ENCODE measurements at regions of chr19 and their contacts with region 1.

Region 1: DNA sequence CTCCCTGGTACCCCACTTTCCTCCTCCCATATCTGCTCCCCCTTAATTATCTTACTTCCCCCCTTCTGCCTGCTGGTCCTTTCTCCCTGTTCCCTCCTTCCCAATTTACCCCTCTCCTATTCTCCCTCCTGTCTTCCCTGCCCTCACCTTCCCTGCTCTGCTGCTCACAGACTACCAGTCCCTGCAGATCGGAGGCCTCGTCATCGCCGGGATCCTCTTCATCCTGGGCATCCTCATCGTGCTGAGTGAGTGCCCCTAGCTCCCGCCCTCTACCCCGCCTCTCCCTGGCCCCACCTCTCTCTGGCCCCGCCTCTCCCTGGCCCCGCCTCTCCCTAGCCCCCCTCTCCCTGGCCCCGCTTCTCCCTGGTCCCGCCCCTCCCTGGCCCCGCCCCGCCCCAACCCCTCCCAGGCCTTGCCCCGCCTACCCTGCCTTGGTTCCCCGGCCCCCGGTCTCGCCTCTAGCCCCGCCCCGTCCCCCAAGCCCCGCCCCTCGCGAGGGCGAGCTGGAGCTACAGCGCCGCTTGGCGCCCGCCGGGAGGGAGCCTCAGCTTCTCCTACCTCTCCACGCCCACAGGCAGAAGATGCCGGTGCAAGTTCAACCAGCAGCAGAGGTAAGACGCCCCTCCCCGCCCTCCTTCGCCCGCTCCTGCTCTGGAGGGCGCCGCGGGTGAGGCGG is 2.0 kb upstream of the FXYD7 start:
- DNase-seq: peak; percentile 95 to 100
- ATAC-seq: peak; percentile 59 to 86
- H3K4me3 ChIP-seq: peak overlapping the region; percentile 34
- H3K27ac ChIP-seq: peak overlapping the region in 1 of 2 experiments; percentile 52; a peak in 2 of 6 replicates
- H3K4me1 ChIP-seq: peaks cover 52% of the 10 kb centered on the region
- CTCF ChIP-seq: peak; percentile 66
- EP300 ChIP-seq: no peak
- POLR2A ChIP-seq: no peak
- RAD21 ChIP-seq: peak; percentile 65 to 82

Region 2: GRCh38 chr19:35090506-35091237 is 50.4 kb before region 1 on chr19:
- CTCF ChIA-PET with region 1: interaction called, 24 read pairs
- POLR2A ChIA-PET with region 1: no interaction called
- DNase-seq: peak; percentile 82 to 99
- ATAC-seq: peak; percentile 82 to 92
- H3K4me3 ChIP-seq: peak overlapping the region; percentile 29; the same call in 2 of the 3 replicates
- H3K27ac ChIP-seq: peak overlapping the region; percentile 10 to 60; a peak in 4 of 6 replicates
- H3K4me1 ChIP-seq: peaks cover 11% of the 10 kb centered on the region; the same call in 2 of the 3 replicates
- CTCF ChIP-seq: peak; percentile 95
- EP300 ChIP-seq: no peak
- POLR2A ChIP-seq: no peak
- RAD21 ChIP-seq: peak; percentile 88 to 97

Region 3: GRCh38 chr19:35114353-35115176 is 26.5 kb before region 1 on chr19:
- CTCF ChIA-PET with region 1: interaction called, 148 read pairs
- POLR2A ChIA-PET with region 1: no interaction called
- DNase-seq: peak; percentile 74 to 95
- ATAC-seq: peak; percentile 45 to 86
- H3K4me3 ChIP-seq: peak overlapping the region; percentile 6; the same call in 2 of the 3 replicates
- H3K27ac ChIP-seq: peak overlapping the region; percentile 19 to 36; a peak in 3 of 6 replicates
- H3K4me1 ChIP-seq: peaks cover 13% of the 10 kb centered on the region; the same call in 1 of the 3 replicates
- CTCF ChIP-seq: peak; percentile 98
- EP300 ChIP-seq: no peak
- POLR2A ChIP-seq: no peak
- RAD21 ChIP-seq: peak; percentile 80

Region 4: GRCh38 chr19:35124098-35125060 is 16.7 kb before region 1 on chr19:
- CTCF ChIA-PET with region 1: interaction called, 148 read pairs
- POLR2A ChIA-PET with region 1: interaction called, 9 read pairs
- DNase-seq: peak; percentile 95 to 100
- ATAC-seq: peak; percentile 82 to 96
- H3K4me3 ChIP-seq: peak overlapping the region; percentile 46
- H3K27ac ChIP-seq: peak overlapping the region; percentile 75 to 83
- H3K4me1 ChIP-seq: peaks cover 22% of the 10 kb centered on the region
- CTCF ChIP-seq: no peak
- EP300 ChIP-seq: no peak
- POLR2A ChIP-seq: peak; percentile 99
- RAD21 ChIP-seq: no peak

Region 5: GRCh38 chr19:35154525-35155406 is 13.7 kb after region 1 on chr19 and contains the start of gene FXYD5:
- CTCF ChIA-PET with region 1: interaction called, 163 read pairs
- POLR2A ChIA-PET with region 1: interaction called, 3 read pairs
- DNase-seq: peak; percentile 76 to 96
- ATAC-seq: peak; percentile 74 to 88
- H3K4me3 ChIP-seq: peak within 1 kb of the TSS; percentile 68
- H3K27ac ChIP-seq: peak within 1 kb of the TSS; percentile 79 to 90
- H3K4me1 ChIP-seq: peaks cover 9% of the 10 kb centered on the region; the same call in 1 of the 3 replicates
- CTCF ChIP-seq: no peak
- EP300 ChIP-seq: no peak
- POLR2A ChIP-seq: peak; percentile 69
- RAD21 ChIP-seq: no peak
- polyA plus RNA-seq, gene FXYD5: 70.8 and 77.3 TPM in 2 replicates

Region 6: DNA sequence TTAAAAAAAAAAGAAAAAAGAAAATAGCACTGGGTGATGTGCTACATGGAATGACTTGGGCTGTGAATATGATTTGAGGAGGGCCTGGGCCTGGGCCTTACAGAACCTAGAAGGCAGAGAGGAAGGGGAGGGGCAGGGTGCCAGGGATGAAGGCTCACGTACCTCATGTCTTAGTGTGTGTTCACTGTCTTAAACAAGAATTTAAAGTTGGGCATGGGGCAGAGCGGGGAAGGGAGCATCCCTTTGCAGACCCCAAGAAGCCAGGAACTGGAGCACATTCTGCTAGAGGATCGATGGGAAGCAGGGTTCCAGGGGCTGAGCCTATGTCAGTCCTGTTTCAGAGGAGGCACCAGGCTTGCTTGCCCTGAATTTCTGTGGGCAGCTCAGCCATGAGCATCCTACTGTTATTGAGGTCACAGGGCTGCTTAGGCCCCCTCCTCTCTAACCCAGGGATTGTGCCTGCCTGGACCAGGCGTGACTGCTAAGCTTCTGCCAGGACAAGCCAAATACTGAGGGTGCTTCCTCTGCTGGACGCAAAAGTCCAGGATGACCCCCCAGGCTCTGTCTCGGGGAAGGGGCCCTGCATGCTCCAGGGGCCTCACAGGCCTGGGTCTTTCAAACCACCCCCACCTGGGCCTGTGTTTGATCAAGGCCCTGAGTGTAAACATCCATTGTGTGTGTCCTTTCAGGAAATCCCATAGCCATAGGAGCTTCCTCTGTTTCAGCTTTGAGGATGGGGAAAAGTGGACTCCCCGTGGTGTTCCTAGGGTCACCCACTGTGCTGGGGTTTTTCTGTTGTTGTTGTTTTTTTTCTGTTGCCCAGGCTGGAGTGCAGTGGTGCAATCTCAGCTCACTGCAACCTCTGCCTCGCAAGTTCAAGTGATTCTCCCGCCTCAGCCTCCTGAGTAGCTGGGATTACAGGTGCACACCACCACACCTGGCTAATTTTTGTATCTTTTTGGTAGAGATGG is 112.5 kb after region 1 on chr19:
- CTCF ChIA-PET with region 1: interaction called, 12 read pairs
- POLR2A ChIA-PET with region 1: no interaction called
- DNase-seq: no peak
- ATAC-seq: no peak
- H3K4me3 ChIP-seq: no peak overlapping the region
- H3K27ac ChIP-seq: no peak overlapping the region
- H3K4me1 ChIP-seq: peaks cover 5% of the 10 kb centered on the region; the same call in 1 of the 3 replicates
- CTCF ChIP-seq: no peak
- EP300 ChIP-seq: no peak
- POLR2A ChIP-seq: no peak
- RAD21 ChIP-seq: no peak

Region 7: GRCh38 chr19:35269421-35270117 is 128.5 kb after region 1 on chr19:
- CTCF ChIA-PET with region 1: interaction called, 29 read pairs
- POLR2A ChIA-PET with region 1: interaction called, 5 read pairs
- DNase-seq: peak; percentile 92 to 97
- ATAC-seq: peak; percentile 70 to 83
- H3K4me3 ChIP-seq: peak overlapping the region; percentile 81
- H3K27ac ChIP-seq: peak overlapping the region; percentile 97 to 99
- H3K4me1 ChIP-seq: peaks cover 14% of the 10 kb centered on the region
- CTCF ChIP-seq: peak; percentile 100
- EP300 ChIP-seq: no peak
- POLR2A ChIP-seq: no peak; the same call in none of the 2 replicates
- RAD21 ChIP-seq: peak; percentile 65 to 89

Measured in A549 (cell line).